ENCODE measurements at regions of chr5 and their contacts with region 1.

Region 1: DNA sequence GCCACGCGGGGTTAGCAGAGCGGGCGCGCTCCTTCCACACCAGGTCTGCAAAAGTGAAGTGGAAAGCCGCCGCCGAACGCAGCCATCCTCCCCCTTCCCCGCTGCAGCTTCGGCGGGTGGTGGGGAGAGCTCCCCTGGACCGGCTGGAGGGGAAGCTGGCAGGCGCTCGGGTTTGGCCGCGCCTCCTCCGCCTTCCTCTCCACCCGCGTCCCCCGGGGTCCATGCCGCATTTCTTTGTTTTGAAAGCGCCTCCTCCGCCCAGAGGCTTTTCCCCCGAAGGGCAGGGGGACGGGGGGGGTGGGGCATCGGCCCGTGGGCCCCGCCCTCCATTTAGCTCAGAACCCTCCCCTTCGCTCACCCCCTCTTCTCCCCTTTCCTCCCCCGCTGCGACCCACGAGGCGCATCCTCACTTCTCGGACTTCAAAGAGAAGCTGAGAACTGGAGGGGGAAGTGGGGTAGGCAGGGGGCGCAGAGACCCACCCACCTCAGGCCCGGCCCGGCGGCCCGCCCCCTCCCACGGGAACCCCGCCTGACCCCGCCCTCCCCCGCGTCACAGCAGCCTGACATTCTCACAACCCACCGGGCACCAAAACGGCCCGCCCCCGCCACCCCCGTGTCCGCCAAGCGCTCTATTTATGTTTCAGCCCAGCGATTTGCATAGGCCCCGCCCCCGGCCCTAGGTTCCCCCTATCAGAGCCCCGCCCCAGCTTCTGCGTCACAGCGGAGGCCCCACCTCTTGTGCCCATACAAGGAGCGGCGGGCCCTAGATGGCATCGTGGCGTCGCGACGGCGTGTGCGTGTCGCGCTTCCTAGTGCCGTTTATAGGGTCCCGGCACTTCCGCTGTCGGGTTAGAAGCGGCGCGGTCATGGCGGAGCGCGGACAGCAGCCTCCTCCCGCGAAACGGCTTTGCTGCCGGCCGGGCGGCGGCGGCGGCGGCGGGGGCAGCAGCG is at the start of gene ZSWIM6:
- DNase-seq: peak; percentile 99 to 100 (median 99)
- H3K4me3 ChIP-seq: peak within 1 kb of the TSS; percentile 92
- H3K27ac ChIP-seq: peak within 1 kb of the TSS; percentile 93 to 98
- H3K4me1 ChIP-seq: peaks cover 4% of the 10 kb centered on the region
- H3K27me3 ChIP-seq: no peaks in the 10 kb centered on the region
- CTCF ChIP-seq: no peak
- EP300 ChIP-seq: no peak
- POLR2A ChIP-seq: peak; percentile 93
- total RNA-seq, gene ZSWIM6: 8.7 to 15.3 (median 13.4) TPM

Region 2: DNA sequence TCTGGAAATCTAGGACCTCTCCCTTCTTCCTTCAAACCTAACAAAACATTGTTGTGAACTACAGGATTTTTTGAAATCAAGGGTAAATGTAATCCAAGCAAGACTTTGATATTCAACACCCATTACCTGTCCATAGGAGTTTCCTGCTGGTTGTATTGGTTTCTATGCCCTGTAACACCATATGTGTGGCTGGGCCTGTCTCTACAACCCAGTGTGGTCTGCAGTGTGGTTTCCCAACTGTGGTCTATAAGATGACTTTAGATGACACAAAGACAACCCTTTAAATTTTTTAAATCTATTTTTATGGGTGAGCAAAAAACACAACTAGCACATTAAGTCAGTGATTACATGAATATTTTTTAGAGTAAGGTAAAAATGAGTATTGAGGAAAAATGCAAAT is 262.5 kb before region 1 on chr5:
- intact Hi-C with region 1: no loop called
- DNase-seq: no peak
- H3K4me3 ChIP-seq: no peak overlapping the region
- H3K27ac ChIP-seq: no peak overlapping the region
- H3K4me1 ChIP-seq: no peaks in the 10 kb centered on the region
- H3K27me3 ChIP-seq: no peaks in the 10 kb centered on the region
- CTCF ChIP-seq: no peak
- EP300 ChIP-seq: no peak
- POLR2A ChIP-seq: no peak

Region 3: GRCh38 chr5:61162010-61162831 is 169.5 kb before region 1 on chr5 and contains the start of gene SMIM15:
- intact Hi-C with region 1: loop called in 2 of 4 experiments (anchors 1 to 5 kb)
- DNase-seq: peak; percentile 84 to 91 (median 88)
- H3K4me3 ChIP-seq: peak within 1 kb of the TSS; percentile 83
- H3K27ac ChIP-seq: peak within 1 kb of the TSS; percentile 86 to 91
- H3K4me1 ChIP-seq: peaks cover 3% of the 10 kb centered on the region
- H3K27me3 ChIP-seq: no peaks in the 10 kb centered on the region
- CTCF ChIP-seq: no peak
- EP300 ChIP-seq: no peak
- POLR2A ChIP-seq: peak; percentile 40
- total RNA-seq, gene SMIM15: 17.6 to 59.3 (median 42.4) TPM

Region 4: DNA sequence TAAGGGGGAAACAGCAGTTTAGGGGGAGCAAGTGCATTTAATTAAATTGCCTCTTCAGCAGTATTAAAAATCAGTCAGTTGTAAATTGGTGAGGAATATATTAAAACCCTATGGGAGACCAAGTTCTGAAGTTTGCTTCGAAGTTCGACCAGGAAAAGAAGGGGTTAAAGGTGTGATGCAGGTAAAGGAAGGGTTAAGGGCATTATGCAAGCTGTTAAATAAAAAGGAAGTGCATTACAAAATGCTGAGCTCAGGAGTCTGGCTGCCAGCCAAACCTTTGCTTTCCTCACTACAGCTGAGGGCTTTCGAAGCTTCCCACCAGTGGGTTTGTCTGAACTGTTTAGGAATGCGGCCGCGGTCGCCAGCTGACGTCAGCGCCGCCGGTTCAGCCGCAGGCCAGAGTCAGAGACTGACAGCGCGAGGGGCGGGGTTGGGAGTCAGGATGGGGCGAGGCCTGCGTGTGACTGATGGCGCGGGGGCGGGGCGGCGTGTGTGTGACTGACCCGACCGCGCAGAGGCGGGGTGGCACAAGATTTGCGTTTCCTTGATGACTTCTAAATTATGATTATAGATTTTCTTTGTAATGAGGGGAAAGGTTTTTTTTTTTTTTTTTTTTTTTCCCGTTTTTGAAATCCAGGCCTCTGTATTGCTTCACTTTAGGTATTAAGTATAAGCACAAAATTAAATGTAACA is 76.9 kb after region 1 on chr5:
- intact Hi-C with region 1: loop called in 2 of 4 experiments (anchors 5 to 10 kb)
- DNase-seq: peak; percentile 99
- H3K4me3 ChIP-seq: peak overlapping the region; percentile 23
- H3K27ac ChIP-seq: peak overlapping the region in 1 of 2 donors; percentile 42
- H3K4me1 ChIP-seq: peaks cover 8% of the 10 kb centered on the region
- H3K27me3 ChIP-seq: no peaks in the 10 kb centered on the region
- CTCF ChIP-seq: no peak
- EP300 ChIP-seq: peak; percentile 90
- POLR2A ChIP-seq: no peak

Region 5: DNA sequence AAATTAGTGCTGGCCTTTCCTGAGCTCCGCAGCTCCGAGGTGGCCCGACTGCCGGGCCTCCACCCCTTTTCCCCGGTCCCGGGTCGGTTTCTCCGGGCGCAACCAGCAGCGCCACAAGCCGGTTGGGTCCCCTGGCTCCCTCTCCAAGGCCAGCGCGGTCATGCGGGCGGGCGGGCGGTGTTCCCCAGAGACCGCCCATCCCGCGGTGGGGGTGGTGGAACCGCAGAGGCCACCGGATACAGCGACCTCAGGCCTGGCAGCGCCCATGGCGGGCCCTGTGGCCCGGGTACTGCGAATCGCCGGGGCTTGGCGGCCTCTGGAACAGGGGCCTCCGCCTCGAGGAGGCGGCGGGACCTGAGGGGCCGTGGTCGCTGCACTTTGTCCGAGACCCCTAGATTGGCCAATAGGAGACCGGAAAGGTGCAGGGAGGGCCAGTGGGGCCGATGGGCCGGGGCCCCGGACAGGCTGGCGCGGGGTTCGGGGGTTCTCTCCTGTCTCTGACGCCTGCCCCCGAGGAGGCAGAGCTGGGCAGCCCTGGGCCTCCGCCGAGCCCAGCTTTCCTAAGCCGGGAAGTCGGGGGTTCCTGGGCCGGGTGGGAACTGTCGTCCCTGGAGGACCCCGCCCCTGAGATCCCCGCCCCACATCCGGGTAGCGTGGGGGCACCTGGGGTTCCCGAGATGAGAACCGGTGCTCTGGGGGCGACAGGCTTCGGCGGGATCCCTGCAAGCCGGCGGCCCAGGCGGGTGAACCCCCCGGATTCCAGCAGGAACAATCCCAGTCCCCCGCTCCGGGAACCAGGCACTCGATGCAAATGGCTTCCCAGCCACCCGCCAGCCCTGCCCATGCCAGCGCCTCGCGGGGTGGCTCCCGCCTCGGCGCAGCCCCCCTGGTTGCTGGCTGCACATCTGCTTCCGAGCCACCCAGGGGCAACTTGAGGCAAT is 294.3 kb after region 1 on chr5:
- intact Hi-C with region 1: loop called in 1 of 4 experiments (anchors 10 kb)
- DNase-seq: peak; percentile 57 to 78 (median 67)
- H3K4me3 ChIP-seq: peak overlapping the region; percentile 47
- H3K27ac ChIP-seq: no peak overlapping the region
- H3K4me1 ChIP-seq: peaks cover 9% of the 10 kb centered on the region
- H3K27me3 ChIP-seq: no peaks in the 10 kb centered on the region
- CTCF ChIP-seq: no peak
- EP300 ChIP-seq: no peak
- POLR2A ChIP-seq: no peak

Region 6: DNA sequence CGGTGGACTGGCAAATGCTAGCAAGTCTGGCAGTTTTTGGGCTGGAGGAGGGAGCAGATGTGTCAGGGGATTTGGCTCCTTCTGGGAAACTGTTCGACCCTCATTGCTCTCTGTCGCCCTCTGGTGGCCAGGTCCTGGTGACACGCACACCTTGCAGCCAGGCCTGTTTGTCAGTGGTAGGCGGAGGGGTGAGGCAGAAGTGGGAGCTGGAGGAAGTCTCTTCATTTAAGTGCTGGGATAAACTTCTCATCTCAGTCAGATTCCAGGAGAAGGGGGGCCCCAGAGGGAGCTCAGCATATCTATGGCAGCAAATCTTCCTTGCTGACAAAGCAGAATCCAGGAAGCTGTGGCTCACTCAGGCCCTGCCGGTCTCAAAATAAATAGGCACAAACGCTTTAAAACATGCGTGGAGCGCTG is 326.9 kb after region 1 on chr5:
- intact Hi-C with region 1: loop called in 1 of 4 experiments (anchors 10 kb)
- DNase-seq: peak; percentile 75 to 87 (median 81)
- H3K4me3 ChIP-seq: no peak overlapping the region
- H3K27ac ChIP-seq: no peak overlapping the region
- H3K4me1 ChIP-seq: no peaks in the 10 kb centered on the region
- H3K27me3 ChIP-seq: no peaks in the 10 kb centered on the region
- CTCF ChIP-seq: peak; percentile 48 to 70 (median 51)
- EP300 ChIP-seq: no peak
- POLR2A ChIP-seq: no peak

Measured in ovary (tissue), 10 donors.